ENCODE measurements at regions of chr7 and their contacts with region 1.

Region 1: GRCh38 chr7:44867073-44867995 is 18.0 kb downstream of the PURB start:
- DNase-seq: no peak
- ATAC-seq: peak in 1 of 2 donors; percentile 94

Region 2: DNA sequence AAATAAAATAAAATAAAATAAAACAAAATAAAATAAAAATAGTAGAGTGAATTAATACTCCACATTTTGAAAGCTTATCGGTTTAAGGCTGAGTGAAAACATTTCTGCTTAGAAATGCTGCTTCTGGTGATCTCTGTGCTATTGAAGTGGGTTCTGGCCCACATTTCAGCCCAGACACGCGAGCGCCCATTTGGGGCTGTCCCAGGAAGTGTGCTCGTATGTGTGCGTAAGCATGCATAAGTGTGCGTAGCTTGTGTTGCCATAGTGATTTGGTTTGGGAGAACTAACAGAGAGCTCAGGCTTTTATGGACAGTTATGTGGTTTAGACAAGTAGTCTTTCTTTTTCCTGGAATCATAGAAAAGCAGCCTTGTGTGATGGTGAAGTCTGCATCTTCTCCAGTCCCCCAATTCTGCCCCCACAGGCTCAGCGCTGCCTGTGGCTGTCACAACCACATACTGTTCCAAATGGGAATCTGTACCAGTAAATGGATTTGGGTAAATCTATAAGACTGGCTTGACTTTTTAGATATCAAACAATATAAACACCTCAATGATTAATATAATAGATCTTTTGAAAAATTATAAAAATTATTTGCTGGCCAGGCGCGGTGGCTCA is 47.8 kb after region 1 on chr7:
- intact Hi-C with region 1: loop called in 1 of 2 experiments (anchors 5 kb)
- DNase-seq: no peak
- ATAC-seq: no peak

Region 3: DNA sequence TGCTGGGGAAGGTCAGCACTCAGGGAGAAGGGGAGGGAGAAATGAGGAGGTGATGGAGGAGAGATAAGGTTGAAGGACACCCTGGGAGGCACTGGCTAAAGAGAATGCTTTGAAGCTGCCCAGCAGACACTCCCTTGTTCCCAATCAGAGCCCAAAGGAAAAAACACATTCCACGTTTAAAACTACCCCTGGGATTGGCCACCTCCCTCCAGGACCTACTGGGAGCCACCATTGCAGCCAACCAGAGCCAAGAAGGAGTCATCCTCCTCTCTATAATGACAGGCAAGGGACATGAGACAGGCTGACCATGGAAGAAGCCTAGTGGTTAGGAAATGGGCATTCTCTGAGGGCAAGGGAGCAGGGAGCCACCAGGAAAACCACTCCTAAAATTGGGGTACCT is 67.7 kb after region 1 on chr7:
- intact Hi-C with region 1: no loop called
- DNase-seq: no peak
- ATAC-seq: no peak

Measured in left cardiac atrium (tissue), 4 donors.